ENCODE measurements at regions of chr6 and their contacts with region 1.

Region 1: GRCh38 chr6:118776607-118777549 is 117.1 kb upstream of the ASF1A start:
- DNase-seq: peak; percentile 48
- ATAC-seq: peak; percentile 74
- H3K4me3 Mint-ChIP-seq: no peak overlapping the region
- H3K27ac Mint-ChIP-seq: no peak overlapping the region
- H3K4me1 Mint-ChIP-seq: peaks cover 11% of the 10 kb centered on the region
- H3K27me3 Mint-ChIP-seq: no peaks in the 10 kb centered on the region
- CTCF ChIP-seq: peak; percentile 35; the same call in 1 of the 2 replicates

Region 2: GRCh38 chr6:120182616-120183015 is 1405.7 kb after region 1 on chr6:
- CTCF ChIA-PET with region 1: no interaction called
- POLR2A ChIA-PET with region 1: interaction called, 10 read pairs
- DNase-seq: no peak
- ATAC-seq: no peak
- H3K4me3 Mint-ChIP-seq: no peak overlapping the region
- H3K27ac Mint-ChIP-seq: no peak overlapping the region
- H3K4me1 Mint-ChIP-seq: no peaks in the 10 kb centered on the region
- H3K27me3 Mint-ChIP-seq: no peaks in the 10 kb centered on the region
- CTCF ChIP-seq: no peak

Measured in WTC11 (cell line).